Ascending aorta (tissue), 2 donors: ENCODE measurements at regions of chr2 and their contacts with region 1.

Region 1: DNA sequence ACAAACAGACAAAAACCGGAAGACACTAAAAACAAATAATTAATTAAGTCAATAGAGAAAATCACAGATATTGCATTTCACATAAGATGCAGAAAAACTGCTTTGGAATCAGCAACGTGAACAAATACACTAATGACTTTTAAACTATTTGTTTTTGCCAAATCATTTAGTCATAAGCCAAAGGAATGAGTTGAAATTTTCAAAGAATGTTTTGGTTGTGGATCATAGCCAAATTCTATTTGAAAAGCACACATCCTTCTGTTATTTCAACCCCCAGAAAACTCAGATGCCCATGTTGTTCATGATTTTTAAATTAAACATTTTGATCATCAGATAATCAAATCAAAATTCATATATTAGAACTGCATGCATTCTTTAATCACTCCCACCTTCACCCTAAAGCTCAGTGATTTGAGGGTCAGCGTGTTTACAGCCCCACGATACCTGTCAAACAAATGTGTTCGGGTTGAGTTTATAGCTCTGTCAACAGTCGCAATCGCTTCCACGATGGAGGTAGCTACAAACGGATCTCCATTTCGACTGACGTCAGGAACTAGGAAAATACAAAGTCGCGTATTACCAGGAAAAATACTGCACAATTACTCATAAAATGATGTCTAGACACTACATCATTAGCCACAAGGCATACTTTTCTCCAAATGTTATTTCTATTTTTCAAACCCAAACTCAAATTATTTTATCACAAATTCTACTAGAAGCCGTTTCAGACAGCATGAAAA is 90.2 kb downstream of the PXDN start:
- DNase-seq: peak in 1 of 2 donors; percentile 79
- H3K4me3 ChIP-seq: peak overlapping the region; percentile 1 to 15
- H3K27ac ChIP-seq: peak overlapping the region; percentile 94 to 97
- H3K4me1 ChIP-seq: peaks cover 22 to 56% of the 10 kb centered on the region in 2 donors
- H3K27me3 ChIP-seq: no peaks in the 10 kb centered on the region
- CTCF ChIP-seq: no peak

Region 2: DNA sequence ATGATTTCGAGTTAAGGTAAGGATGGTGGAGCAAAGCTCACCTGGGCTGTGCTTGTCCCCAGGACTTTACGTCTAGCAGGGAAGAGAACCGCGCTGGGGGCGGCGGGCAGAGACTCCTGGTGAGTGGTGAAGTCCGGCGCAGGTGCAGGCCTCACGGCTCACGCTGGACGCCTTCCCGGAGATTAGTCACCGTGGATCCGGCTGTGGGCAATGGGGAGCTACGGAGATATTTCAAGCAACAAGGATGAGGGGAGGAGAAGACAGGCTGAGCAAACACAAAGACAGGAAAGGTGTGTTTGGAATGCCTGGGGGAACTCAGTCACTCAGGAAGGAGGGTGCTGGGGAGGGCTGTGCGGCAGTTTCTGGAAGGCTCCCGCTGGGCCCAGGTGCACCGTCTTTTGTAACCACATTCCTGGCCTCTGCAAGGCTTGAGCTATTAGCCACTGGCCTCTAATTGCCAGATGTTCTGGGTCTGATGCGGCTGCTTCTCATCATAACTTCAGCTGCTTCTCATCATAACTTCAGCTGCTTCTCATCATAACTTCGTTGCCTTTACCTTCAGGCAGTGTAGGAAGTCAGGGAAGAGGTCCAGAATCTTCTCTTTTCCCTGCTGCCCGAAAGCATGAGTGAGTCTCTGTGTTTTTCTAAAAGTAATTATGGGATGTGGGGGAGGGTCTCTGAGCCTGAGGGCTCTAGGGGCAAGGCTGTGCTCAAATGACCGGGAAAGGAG is 28.8 kb before region 1 on chr2:
- intact Hi-C with region 1: loop called (anchors 2 kb)
- DNase-seq: no peak
- H3K4me3 ChIP-seq: no peak overlapping the region
- H3K27ac ChIP-seq: no peak overlapping the region
- H3K4me1 ChIP-seq: peaks cover 0 to 8% of the 10 kb centered on the region in 2 donors
- H3K27me3 ChIP-seq: no peaks in the 10 kb centered on the region
- CTCF ChIP-seq: no peak

Region 3: GRCh38 chr2:1675633-1676032 is 21.5 kb after region 1 on chr2:
- intact Hi-C with region 1: loop called (anchors 2 kb)
- DNase-seq: peak; percentile 39 to 86
- H3K4me3 ChIP-seq: no peak overlapping the region
- H3K27ac ChIP-seq: peak overlapping the region; percentile 49 to 76
- H3K4me1 ChIP-seq: peaks cover 0 to 8% of the 10 kb centered on the region in 2 donors
- H3K27me3 ChIP-seq: no peaks in the 10 kb centered on the region
- CTCF ChIP-seq: peak; percentile 19 to 53 (median 35)

Region 4: GRCh38 chr2:1742681-1743395 is 88.7 kb after region 1 on chr2:
- intact Hi-C with region 1: loop called (anchors 1 kb)
- DNase-seq: peak; percentile 67 to 95
- H3K4me3 ChIP-seq: peak overlapping the region; percentile 80 to 92
- H3K27ac ChIP-seq: peak overlapping the region; percentile 99 to 100
- H3K4me1 ChIP-seq: peaks cover 4 to 30% of the 10 kb centered on the region in 2 donors
- H3K27me3 ChIP-seq: no peaks in the 10 kb centered on the region
- CTCF ChIP-seq: peak; percentile 42 to 73 (median 54)

Region 5: GRCh38 chr2:1823187-1824169 is 169.4 kb after region 1 on chr2:
- intact Hi-C with region 1: loop called (anchors 2 kb)
- DNase-seq: peak in 1 of 2 donors; percentile 82
- H3K4me3 ChIP-seq: peak overlapping the region in 1 of 2 donors; percentile 65
- H3K27ac ChIP-seq: peak overlapping the region; percentile 85 to 94
- H3K4me1 ChIP-seq: peaks cover 8 to 35% of the 10 kb centered on the region in 2 donors
- H3K27me3 ChIP-seq: no peaks in the 10 kb centered on the region
- CTCF ChIP-seq: peak in 2 of 3 experiments; percentile 33 to 41